Ovary (tissue), 10 donors: ENCODE measurements at regions of chr17 and their contacts with region 1.

Region 1: GRCh38 chr17:70144260-70144846 is 25.0 kb upstream of the KCNJ2 start:
- DNase-seq: no peak
- H3K4me3 ChIP-seq: no peak overlapping the region
- H3K27ac ChIP-seq: no peak overlapping the region
- H3K4me1 ChIP-seq: no peaks in the 10 kb centered on the region
- H3K27me3 ChIP-seq: no peaks in the 10 kb centered on the region
- CTCF ChIP-seq: peak; percentile 65 to 83 (median 69)
- EP300 ChIP-seq: no peak
- POLR2A ChIP-seq: no peak

Region 2: DNA sequence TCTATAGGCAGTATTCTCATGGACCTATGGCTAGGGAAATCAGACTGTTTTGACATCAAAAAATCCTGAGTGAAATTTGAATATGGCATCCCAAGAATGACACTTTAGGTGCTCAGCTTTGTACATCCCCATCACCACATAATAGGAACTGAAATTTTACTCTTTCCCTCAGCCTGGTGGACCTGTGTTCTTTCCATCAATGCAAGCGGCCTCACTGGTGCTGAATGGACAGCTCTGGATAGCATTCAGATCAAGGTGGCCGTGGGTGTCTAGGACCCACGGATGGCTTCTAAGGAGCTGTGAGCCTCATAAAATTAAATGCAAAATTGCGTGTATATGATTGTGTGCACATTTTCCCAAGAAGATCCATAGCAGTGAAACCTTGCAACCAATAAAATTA is 577.2 kb before region 1 on chr17:
- intact Hi-C with region 1: loop called in 1 of 4 experiments (anchors 5 kb)
- DNase-seq: no peak
- H3K4me3 ChIP-seq: no peak overlapping the region
- H3K27ac ChIP-seq: no peak overlapping the region
- H3K4me1 ChIP-seq: no peaks in the 10 kb centered on the region
- H3K27me3 ChIP-seq: no peaks in the 10 kb centered on the region
- CTCF ChIP-seq: no peak
- EP300 ChIP-seq: no peak
- POLR2A ChIP-seq: no peak

Region 3: GRCh38 chr17:69607162-69607834 is 537.1 kb before region 1 on chr17:
- intact Hi-C with region 1: loop called in 3 of 4 experiments (anchors 5 to 10 kb)
- DNase-seq: peak; percentile 61 to 81 (median 72)
- H3K4me3 ChIP-seq: no peak overlapping the region
- H3K27ac ChIP-seq: peak overlapping the region in 1 of 2 donors; percentile 51
- H3K4me1 ChIP-seq: peaks cover 2% of the 10 kb centered on the region
- H3K27me3 ChIP-seq: no peaks in the 10 kb centered on the region
- CTCF ChIP-seq: peak; percentile 61 to 82 (median 80)
- EP300 ChIP-seq: no peak
- POLR2A ChIP-seq: no peak

Region 4: GRCh38 chr17:70055000-70055399 is 89.4 kb before region 1 on chr17:
- intact Hi-C with region 1: loop called in 1 of 4 experiments (anchors 5 kb)
- DNase-seq: no peak
- H3K4me3 ChIP-seq: no peak overlapping the region
- H3K27ac ChIP-seq: peak overlapping the region in 1 of 2 donors; percentile 89
- H3K4me1 ChIP-seq: peaks cover 3% of the 10 kb centered on the region
- H3K27me3 ChIP-seq: no peaks in the 10 kb centered on the region
- CTCF ChIP-seq: no peak
- EP300 ChIP-seq: no peak
- POLR2A ChIP-seq: no peak

Region 5: GRCh38 chr17:70344386-70345060 is 200.2 kb after region 1 on chr17:
- intact Hi-C with region 1: no loop called
- DNase-seq: no peak
- H3K4me3 ChIP-seq: peak overlapping the region; percentile 4
- H3K27ac ChIP-seq: no peak overlapping the region
- H3K4me1 ChIP-seq: no peaks in the 10 kb centered on the region
- H3K27me3 ChIP-seq: no peaks in the 10 kb centered on the region
- CTCF ChIP-seq: no peak
- EP300 ChIP-seq: no peak
- POLR2A ChIP-seq: no peak